ENCODE measurements at regions of chr12 and their contacts with region 1.

Region 1: GRCh38 chr12:110600254-110600653 is 13.7 kb upstream of the TCTN1 start:
- DNase-seq: peak; percentile 76
- ATAC-seq: peak; percentile 35
- H3K4me3 ChIP-seq: no peak overlapping the region
- H3K4me3 Mint-ChIP-seq: peak overlapping the region; percentile 7
- H3K27ac ChIP-seq: peak overlapping the region in 1 of 2 donors; percentile 43
- H3K27ac Mint-ChIP-seq: peak overlapping the region; percentile 75
- H3K4me1 ChIP-seq: peaks cover 45 to 53% of the 10 kb centered on the region in 2 donors
- H3K4me1 Mint-ChIP-seq: peaks cover 37% of the 10 kb centered on the region
- H3K27me3 ChIP-seq: no peaks in the 10 kb centered on the region
- H3K27me3 Mint-ChIP-seq: no peaks in the 10 kb centered on the region
- CTCF ChIP-seq: peak; percentile 63

Region 2: DNA sequence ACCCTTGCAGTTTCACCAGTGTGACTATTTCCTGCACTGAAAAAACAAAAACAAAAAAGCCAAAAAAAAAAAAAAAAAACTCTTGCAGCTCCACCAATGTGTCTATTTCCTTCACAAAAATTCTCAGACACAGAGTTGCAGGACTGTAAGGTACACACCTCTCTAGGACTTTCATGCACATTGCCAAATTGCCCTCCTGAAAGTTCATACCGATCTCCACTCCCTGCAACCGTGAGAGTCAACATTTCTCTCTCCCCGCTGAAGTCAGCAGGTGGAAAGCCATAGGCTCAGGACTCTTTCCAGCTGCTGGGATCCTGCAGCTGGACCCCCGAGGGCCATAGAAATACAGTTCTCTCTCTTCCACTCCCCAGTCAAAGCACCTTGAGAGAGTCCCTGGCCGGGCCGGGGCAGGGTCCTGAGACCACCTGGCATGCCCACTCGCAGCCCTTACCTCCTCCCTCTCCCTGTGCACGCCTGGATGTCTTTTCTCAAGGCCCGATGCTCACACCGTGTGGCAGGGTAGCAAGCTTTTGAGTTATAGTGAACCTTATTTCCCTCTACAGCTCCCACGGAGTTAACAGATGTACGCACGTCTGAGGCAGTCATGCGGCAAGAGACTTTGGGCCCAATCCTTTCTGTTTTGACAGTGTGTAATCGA is 1050.5 kb before region 1 on chr12:
- CTCF ChIA-PET with region 1: no interaction called
- POLR2A ChIA-PET with region 1: no interaction called
- intact Hi-C with region 1: no loop called
- DNase-seq: no peak
- ATAC-seq: no peak
- H3K4me3 ChIP-seq: no peak overlapping the region
- H3K4me3 Mint-ChIP-seq: no peak overlapping the region
- H3K27ac ChIP-seq: no peak overlapping the region
- H3K27ac Mint-ChIP-seq: no peak overlapping the region
- H3K4me1 ChIP-seq: no peaks in the 10 kb centered on the region
- H3K4me1 Mint-ChIP-seq: no peaks in the 10 kb centered on the region
- H3K27me3 ChIP-seq: peaks cover 0 to 14% (median 0%) of the 10 kb centered on the region in 4 experiments
- H3K27me3 Mint-ChIP-seq: peaks cover 9% of the 10 kb centered on the region
- CTCF ChIP-seq: no peak

Region 3: GRCh38 chr12:110100315-110100970 is 499.8 kb before region 1 on chr12:
- CTCF ChIA-PET with region 1: no interaction called
- POLR2A ChIA-PET with region 1: no interaction called
- intact Hi-C with region 1: loop called (anchors 10 kb)
- DNase-seq: peak; percentile 91
- ATAC-seq: peak; percentile 98
- H3K4me3 ChIP-seq: peak overlapping the region in 2 of 5 experiments; percentile 15 to 21
- H3K4me3 Mint-ChIP-seq: peak overlapping the region; percentile 67
- H3K27ac ChIP-seq: peak overlapping the region; percentile 72 to 73
- H3K27ac Mint-ChIP-seq: peak overlapping the region; percentile 81
- H3K4me1 ChIP-seq: peaks cover 21 to 22% of the 10 kb centered on the region in 2 donors
- H3K4me1 Mint-ChIP-seq: peaks cover 24% of the 10 kb centered on the region
- H3K27me3 ChIP-seq: no peaks in the 10 kb centered on the region
- H3K27me3 Mint-ChIP-seq: no peaks in the 10 kb centered on the region
- CTCF ChIP-seq: peak; percentile 93

Region 4: DNA sequence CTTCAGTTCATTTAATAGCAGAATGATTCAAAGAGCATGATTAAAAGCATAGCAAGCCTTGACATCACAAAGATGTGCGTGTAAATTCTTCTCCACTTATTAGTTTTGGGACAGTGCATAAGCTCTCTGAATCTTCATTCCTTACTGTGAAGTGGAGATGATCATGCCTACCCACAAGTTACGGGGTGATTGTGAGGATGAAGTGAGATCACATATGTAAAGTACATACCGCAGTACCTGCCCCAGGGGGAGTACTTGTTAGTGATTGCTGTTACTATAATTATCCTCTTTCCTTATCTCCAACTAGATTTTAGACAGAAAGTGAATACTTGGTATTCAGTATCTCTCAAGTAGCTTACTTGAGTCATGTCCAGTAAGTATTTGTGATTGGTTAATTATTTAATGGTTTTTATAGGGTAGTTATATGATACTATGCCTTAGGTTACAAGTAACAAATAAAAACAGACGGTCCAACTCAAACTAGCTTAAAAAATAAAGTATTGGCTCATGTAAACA is 92.1 kb before region 1 on chr12:
- CTCF ChIA-PET with region 1: interaction called, 138 read pairs
- POLR2A ChIA-PET with region 1: no interaction called
- intact Hi-C with region 1: loop called (anchors 1 kb)
- DNase-seq: no peak
- ATAC-seq: no peak
- H3K4me3 ChIP-seq: no peak overlapping the region
- H3K4me3 Mint-ChIP-seq: no peak overlapping the region
- H3K27ac ChIP-seq: no peak overlapping the region
- H3K27ac Mint-ChIP-seq: no peak overlapping the region
- H3K4me1 ChIP-seq: no peaks in the 10 kb centered on the region
- H3K4me1 Mint-ChIP-seq: no peaks in the 10 kb centered on the region
- H3K27me3 ChIP-seq: no peaks in the 10 kb centered on the region
- H3K27me3 Mint-ChIP-seq: no peaks in the 10 kb centered on the region
- CTCF ChIP-seq: no peak

Region 5: DNA sequence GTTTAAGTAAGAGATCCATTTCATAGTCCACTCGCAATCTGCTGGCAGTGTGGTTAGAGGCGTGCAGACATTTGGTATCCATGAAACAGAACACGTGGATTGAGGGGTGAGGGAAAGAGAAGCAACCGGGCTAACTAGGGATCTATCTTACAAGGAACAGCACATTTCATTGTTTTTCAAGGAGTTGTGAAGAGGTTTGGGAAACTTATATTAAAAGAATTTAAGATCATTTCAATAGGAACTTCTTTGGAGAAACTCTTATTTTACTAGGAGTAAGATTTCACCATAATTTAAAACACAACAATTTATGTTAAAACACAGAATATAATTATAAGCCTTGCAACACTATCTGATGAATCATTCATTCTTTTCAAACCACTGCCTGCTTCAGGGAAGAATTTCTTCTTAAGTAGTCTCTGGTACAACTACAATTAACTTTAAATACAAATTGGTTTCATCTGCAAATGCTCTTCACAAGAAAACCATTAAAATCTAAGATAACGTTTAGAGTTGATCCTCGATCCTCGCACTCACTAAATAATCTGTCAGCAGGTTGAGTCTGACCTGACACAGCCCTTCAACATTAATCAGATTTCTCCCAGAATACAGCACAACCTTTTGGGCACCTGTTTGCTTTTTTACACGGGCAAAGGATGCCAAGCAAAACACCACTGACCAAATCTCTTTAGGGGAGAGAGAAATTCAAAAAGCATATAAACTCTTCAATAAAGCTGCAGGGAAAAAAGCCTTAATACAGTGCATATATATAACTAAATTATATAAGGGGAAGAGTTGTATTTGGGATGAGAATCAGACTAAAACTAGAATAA is 44.5 kb before region 1 on chr12:
- CTCF ChIA-PET with region 1: interaction called, 274 read pairs
- POLR2A ChIA-PET with region 1: interaction called, 9 read pairs
- intact Hi-C with region 1: loop called (anchors 1 kb)
- DNase-seq: no peak
- ATAC-seq: no peak
- H3K4me3 ChIP-seq: no peak overlapping the region
- H3K4me3 Mint-ChIP-seq: no peak overlapping the region
- H3K27ac ChIP-seq: no peak overlapping the region
- H3K27ac Mint-ChIP-seq: no peak overlapping the region
- H3K4me1 ChIP-seq: peaks cover 27 to 31% of the 10 kb centered on the region in 2 donors
- H3K4me1 Mint-ChIP-seq: peaks cover 50% of the 10 kb centered on the region
- H3K27me3 ChIP-seq: no peaks in the 10 kb centered on the region
- H3K27me3 Mint-ChIP-seq: no peaks in the 10 kb centered on the region
- CTCF ChIP-seq: no peak

Region 6: DNA sequence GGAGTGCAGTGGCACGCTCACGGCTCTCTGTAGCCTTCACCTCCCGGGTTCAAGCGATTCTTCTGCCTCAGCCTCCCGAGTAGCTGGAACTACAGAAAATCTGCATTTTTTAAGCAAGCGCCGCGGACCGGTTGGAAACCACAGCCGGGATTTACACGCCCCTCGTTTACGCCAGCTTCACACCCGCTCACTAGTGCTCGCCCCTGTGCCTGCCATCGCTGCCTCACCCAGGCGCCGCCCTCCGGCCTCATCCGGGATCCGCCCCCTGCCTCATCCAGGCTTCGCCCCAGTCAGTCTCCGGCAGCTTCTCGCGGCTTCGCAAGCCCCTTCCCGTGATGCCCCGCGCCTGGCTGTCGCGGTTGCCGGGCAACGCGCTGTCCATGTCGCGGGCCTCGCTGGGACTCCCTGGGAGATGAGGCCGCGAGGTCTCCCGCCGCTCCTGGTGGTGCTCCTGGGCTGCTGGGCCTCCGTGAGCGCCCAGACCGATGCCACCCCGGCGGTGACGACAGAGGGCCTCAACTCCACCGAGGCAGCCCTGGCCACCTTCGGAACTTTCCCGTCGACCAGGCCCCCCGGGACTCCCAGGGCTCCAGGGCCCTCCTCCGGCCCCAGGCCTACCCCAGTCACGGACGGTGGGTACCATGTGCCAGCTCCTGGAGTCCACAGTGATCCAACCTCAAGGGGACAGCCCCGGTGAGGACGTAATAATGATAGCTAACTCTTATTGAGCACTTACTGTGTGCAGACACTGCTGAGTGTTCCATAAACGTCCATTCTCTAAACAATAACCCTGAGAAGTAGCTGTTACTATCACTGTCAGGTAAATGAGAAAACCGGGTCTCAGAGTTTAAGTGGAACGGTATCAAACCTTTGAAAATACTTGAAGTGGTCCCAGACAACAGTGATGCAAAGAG is 13.8 kb after region 1 on chr12 and contains the start of gene TCTN1:
- CTCF ChIA-PET with region 1: interaction called, 91 read pairs
- POLR2A ChIA-PET with region 1: interaction called, 10 read pairs
- intact Hi-C with region 1: loop called (anchors 1 kb)
- DNase-seq: peak; percentile 94
- ATAC-seq: peak; percentile 99
- H3K4me3 ChIP-seq: peak within 1 kb of the TSS; percentile 57 to 84 (median 70)
- H3K4me3 Mint-ChIP-seq: peak within 1 kb of the TSS; percentile 91
- H3K27ac ChIP-seq: peak within 1 kb of the TSS; percentile 83 to 98
- H3K27ac Mint-ChIP-seq: peak within 1 kb of the TSS; percentile 96
- H3K4me1 ChIP-seq: peaks cover 42 to 65% of the 10 kb centered on the region in 2 donors
- H3K4me1 Mint-ChIP-seq: peaks cover 49% of the 10 kb centered on the region
- H3K27me3 ChIP-seq: no peaks in the 10 kb centered on the region
- H3K27me3 Mint-ChIP-seq: no peaks in the 10 kb centered on the region
- CTCF ChIP-seq: no peak
- total RNA-seq, gene TCTN1: 69.8 and 74.5 TPM in 2 replicates

Region 7: DNA sequence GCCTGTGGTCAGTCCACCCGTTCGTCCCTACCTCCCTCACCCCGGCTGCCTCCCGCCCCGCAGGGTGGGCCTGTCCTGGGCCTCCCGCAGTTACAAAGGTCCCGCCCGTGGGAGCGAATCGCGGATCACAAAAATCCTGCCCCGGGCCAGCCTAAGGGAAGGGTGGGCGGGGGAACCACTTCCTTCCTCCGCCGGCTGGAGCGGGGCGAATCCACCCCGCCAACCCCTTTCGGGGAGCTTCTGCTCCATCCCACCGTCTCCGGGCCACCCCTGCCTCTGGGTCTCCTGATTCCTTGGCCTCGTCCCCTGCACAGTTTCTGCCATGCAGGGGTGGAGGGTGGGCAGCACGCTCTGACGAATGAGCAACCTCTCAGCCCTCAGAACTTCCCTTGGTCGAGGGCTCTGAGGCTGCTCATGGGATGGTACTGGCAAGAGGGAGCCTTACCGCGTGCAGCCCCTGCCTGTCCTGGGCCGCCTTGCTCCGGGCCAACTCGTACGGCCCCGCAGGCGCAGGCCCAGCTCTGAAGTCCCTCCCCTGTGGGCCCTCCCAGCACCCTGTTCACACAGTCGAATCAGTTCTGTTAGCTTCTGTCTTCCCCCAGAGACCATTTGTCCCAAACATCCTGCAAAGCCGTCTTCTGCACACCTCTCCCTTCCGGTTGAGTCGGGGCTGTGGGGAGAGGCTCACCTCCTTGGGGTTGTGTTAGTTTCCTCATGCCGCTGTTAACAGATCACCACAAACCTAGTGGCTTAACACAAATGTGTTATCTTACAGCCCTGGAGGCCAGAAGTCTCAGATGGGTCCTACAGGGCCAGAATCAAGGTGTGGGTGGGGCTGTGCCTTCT is 89.2 kb after region 1 on chr12:
- CTCF ChIA-PET with region 1: interaction called, 34 read pairs
- POLR2A ChIA-PET with region 1: interaction called, 18 read pairs
- intact Hi-C with region 1: no loop called
- DNase-seq: peak; percentile 79
- ATAC-seq: peak; percentile 71
- H3K4me3 ChIP-seq: peak overlapping the region in 4 of 5 experiments; percentile 72 to 98 (median 88)
- H3K4me3 Mint-ChIP-seq: peak overlapping the region; percentile 99
- H3K27ac ChIP-seq: peak overlapping the region; percentile 55 to 70
- H3K27ac Mint-ChIP-seq: peak overlapping the region; percentile 96
- H3K4me1 ChIP-seq: peaks cover 54 to 69% of the 10 kb centered on the region in 2 donors
- H3K4me1 Mint-ChIP-seq: peaks cover 71% of the 10 kb centered on the region
- H3K27me3 ChIP-seq: no peaks in the 10 kb centered on the region
- H3K27me3 Mint-ChIP-seq: no peaks in the 10 kb centered on the region
- CTCF ChIP-seq: no peak

Region 8: DNA sequence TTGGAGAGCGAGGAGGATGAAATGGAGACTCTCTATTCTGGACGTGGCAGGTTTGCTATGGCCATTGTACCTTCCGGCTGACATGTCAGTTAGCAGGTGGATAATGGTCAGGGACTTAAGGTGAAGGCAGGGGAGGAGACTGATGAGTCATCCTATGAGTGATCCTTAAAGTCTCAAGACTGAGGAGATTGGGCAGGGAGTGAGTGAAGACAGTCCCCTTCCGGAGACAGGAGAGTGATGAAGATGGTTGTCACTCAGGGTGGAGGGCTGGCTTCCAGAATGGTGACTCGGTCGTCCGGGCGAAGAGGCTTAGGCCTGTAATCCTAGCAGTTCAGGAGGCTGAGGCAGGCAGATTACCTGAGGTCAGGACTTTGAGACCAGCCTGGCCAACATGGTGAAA is 196.7 kb after region 1 on chr12:
- CTCF ChIA-PET with region 1: no interaction called
- POLR2A ChIA-PET with region 1: no interaction called
- intact Hi-C with region 1: no loop called
- DNase-seq: no peak
- ATAC-seq: no peak
- H3K4me3 ChIP-seq: no peak overlapping the region
- H3K4me3 Mint-ChIP-seq: no peak overlapping the region
- H3K27ac ChIP-seq: no peak overlapping the region
- H3K27ac Mint-ChIP-seq: no peak overlapping the region
- H3K4me1 ChIP-seq: no peaks in the 10 kb centered on the region
- H3K4me1 Mint-ChIP-seq: no peaks in the 10 kb centered on the region
- H3K27me3 ChIP-seq: no peaks in the 10 kb centered on the region
- H3K27me3 Mint-ChIP-seq: no peaks in the 10 kb centered on the region
- CTCF ChIP-seq: no peak